Endothelial cell of umbilical vein (primary cell): ENCODE measurements at regions of chr18 and their contacts with region 1.

Region 1: GRCh38 chr18:51197661-51198424 is at the start of gene MEX3C:
- DNase-seq: peak; percentile 99
- H3K4me3 ChIP-seq: peak within 1 kb of the TSS; percentile 65 to 95 (median 95)
- H3K27ac ChIP-seq: peak within 1 kb of the TSS; percentile 91
- H3K4me1 ChIP-seq: peaks cover 20% of the 10 kb centered on the region
- H3K27me3 ChIP-seq: no peaks in the 10 kb centered on the region
- CTCF ChIP-seq: peak in 1 of 2 donors; percentile 22
- POLR2A ChIP-seq: peak; percentile 72
- total RNA-seq, gene MEX3C: 45.2 and 45.7 TPM in 2 replicates

Region 2: GRCh38 chr18:50374753-50375391 is 823.0 kb before region 1 on chr18 and contains the start of gene SKA1:
- CTCF ChIA-PET with region 1: no interaction called
- POLR2A ChIA-PET with region 1: no interaction called
- dilution Hi-C with region 1: no loop called
- intact Hi-C with region 1: loop called (anchors 5 kb)
- DNase-seq: peak; percentile 95
- H3K4me3 ChIP-seq: peak within 1 kb of the TSS; percentile 49 to 88 (median 58)
- H3K27ac ChIP-seq: peak within 1 kb of the TSS; percentile 21
- H3K4me1 ChIP-seq: peaks cover 9% of the 10 kb centered on the region
- H3K27me3 ChIP-seq: peaks cover 0 to 3% of the 10 kb centered on the region in 2 experiments
- CTCF ChIP-seq: no peak
- POLR2A ChIP-seq: peak; percentile 79
- total RNA-seq, gene SKA1: 21.9 and 23.9 TPM in 2 replicates

Region 3: DNA sequence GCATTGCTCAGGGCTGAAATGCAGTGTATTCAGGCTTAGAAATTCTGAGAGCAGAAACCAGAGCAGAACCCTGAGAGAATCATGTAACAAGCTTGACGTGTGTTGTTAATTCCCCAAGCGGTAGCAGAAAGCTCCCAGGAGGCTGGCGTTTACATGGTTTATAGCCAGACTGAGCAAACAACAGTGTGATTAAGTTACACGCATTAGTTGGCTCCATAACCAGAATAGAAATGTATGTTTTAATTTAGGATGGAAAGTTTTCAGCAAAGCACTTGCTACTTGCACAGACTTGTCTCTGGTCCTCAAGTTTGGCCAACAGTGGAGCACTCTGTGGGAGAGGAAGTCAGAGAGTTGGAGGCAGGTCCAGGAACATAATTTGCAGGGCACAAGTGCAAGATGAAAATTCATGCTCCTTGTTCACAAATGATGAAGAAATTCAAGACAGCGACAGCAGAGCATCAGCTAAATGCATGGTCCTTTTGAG is 568.7 kb before region 1 on chr18:
- CTCF ChIA-PET with region 1: no interaction called
- POLR2A ChIA-PET with region 1: no interaction called
- dilution Hi-C with region 1: no loop called
- intact Hi-C with region 1: no loop called
- DNase-seq: no peak
- H3K4me3 ChIP-seq: no peak overlapping the region
- H3K27ac ChIP-seq: no peak overlapping the region
- H3K4me1 ChIP-seq: no peaks in the 10 kb centered on the region
- H3K27me3 ChIP-seq: no peaks in the 10 kb centered on the region
- CTCF ChIP-seq: no peak
- POLR2A ChIP-seq: no peak

Region 4: GRCh38 chr18:50967714-50968661 is 229.9 kb before region 1 on chr18 and contains the start of gene ELAC1:
- CTCF ChIA-PET with region 1: no interaction called
- POLR2A ChIA-PET with region 1: no interaction called
- dilution Hi-C with region 1: no loop called
- intact Hi-C with region 1: loop called (anchors 1 kb)
- DNase-seq: peak; percentile 75
- H3K4me3 ChIP-seq: peak within 1 kb of the TSS; percentile 58 to 95 (median 93)
- H3K27ac ChIP-seq: peak within 1 kb of the TSS; percentile 87
- H3K4me1 ChIP-seq: peaks cover 11% of the 10 kb centered on the region
- H3K27me3 ChIP-seq: no peaks in the 10 kb centered on the region
- CTCF ChIP-seq: no peak
- POLR2A ChIP-seq: peak; percentile 94
- total RNA-seq, gene ELAC1: 6.0 and 7.6 TPM in 2 replicates

Region 5: DNA sequence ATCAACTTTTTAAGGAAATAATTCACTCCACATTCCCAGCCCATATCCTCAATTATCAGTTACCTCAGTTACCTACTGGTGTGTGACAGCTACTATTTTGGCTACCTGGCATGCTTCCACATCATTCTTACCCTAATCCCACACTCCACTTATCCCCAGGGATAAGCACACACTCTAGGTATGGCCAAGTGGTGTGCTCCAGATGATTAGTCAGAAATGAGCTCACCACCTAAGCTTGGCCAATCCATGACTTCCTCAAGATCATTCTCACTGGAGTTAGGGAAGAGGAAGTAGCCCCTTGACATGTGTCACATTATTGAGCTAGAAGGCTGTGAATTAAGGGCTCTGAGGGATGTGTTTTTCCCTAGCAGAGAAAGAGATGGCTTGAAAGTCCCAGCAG is 188.8 kb before region 1 on chr18:
- CTCF ChIA-PET with region 1: no interaction called
- POLR2A ChIA-PET with region 1: no interaction called
- dilution Hi-C with region 1: no loop called
- intact Hi-C with region 1: no loop called
- DNase-seq: no peak
- H3K4me3 ChIP-seq: no peak overlapping the region
- H3K27ac ChIP-seq: no peak overlapping the region
- H3K4me1 ChIP-seq: no peaks in the 10 kb centered on the region
- H3K27me3 ChIP-seq: no peaks in the 10 kb centered on the region
- CTCF ChIP-seq: no peak
- POLR2A ChIP-seq: no peak

Region 6: DNA sequence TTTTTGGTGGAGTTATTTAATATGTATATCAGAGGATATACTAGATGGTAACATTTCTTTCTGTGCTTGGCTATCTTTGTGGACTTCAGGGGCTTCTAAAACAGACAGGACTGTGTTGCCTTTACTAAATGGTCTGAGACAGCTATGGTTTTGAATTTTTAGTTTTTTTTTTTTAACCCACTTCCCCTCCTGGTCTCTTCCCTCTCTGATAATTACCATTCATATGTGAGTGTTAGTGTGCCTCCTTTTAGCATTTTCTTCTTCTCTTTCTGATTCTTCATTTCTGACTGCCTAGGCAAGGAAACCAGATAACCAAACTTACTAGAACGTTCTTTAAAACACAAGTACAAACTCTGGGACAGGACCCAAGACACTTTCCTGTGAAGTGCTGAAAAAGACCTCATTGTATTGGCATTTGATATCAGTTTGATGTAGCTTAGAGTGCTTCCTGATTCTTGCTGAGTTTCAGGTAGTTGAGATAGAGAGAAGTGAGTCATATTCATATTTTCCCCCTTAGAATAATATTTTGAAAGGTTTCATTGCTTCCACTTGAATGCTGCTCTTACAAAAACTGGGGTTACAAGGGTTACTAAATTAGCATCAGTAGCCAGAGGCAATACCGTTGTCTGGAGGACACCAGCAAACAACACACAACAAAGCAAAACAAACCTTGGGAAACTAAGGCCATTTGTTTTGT is 115.1 kb before region 1 on chr18:
- CTCF ChIA-PET with region 1: no interaction called
- POLR2A ChIA-PET with region 1: no interaction called
- dilution Hi-C with region 1: no loop called
- intact Hi-C with region 1: loop called (anchors 5 kb)
- DNase-seq: peak; percentile 67
- H3K4me3 ChIP-seq: no peak overlapping the region
- H3K27ac ChIP-seq: peak overlapping the region; percentile 57
- H3K4me1 ChIP-seq: peaks cover 17% of the 10 kb centered on the region
- H3K27me3 ChIP-seq: no peaks in the 10 kb centered on the region
- CTCF ChIP-seq: no peak
- POLR2A ChIP-seq: no peak

Region 7: GRCh38 chr18:51275712-51276476 is 78.1 kb after region 1 on chr18:
- CTCF ChIA-PET with region 1: no interaction called
- POLR2A ChIA-PET with region 1: no interaction called
- dilution Hi-C with region 1: no loop called
- intact Hi-C with region 1: no loop called
- DNase-seq: no peak
- H3K4me3 ChIP-seq: no peak overlapping the region
- H3K27ac ChIP-seq: no peak overlapping the region
- H3K4me1 ChIP-seq: no peaks in the 10 kb centered on the region
- H3K27me3 ChIP-seq: no peaks in the 10 kb centered on the region
- CTCF ChIP-seq: no peak
- POLR2A ChIP-seq: no peak

Region 8: GRCh38 chr18:51361130-51361860 is 163.5 kb after region 1 on chr18:
- CTCF ChIA-PET with region 1: no interaction called
- POLR2A ChIA-PET with region 1: no interaction called
- dilution Hi-C with region 1: no loop called
- intact Hi-C with region 1: loop called (anchors 5 kb)
- DNase-seq: peak; percentile 29
- H3K4me3 ChIP-seq: no peak overlapping the region
- H3K27ac ChIP-seq: no peak overlapping the region
- H3K4me1 ChIP-seq: peaks cover 3% of the 10 kb centered on the region
- H3K27me3 ChIP-seq: no peaks in the 10 kb centered on the region
- CTCF ChIP-seq: no peak
- POLR2A ChIP-seq: no peak